ENCODE measurements at regions of chr5 and their contacts with region 1.

Region 1: GRCh38 chr5:148374692-148375360 is 8.9 kb upstream of the FBXO38 start:
- DNase-seq: peak in 2 of 5 donors; percentile 22 to 26
- ATAC-seq: peak in 3 of 4 donors; percentile 49 to 82 (median 78)
- H3K4me3 ChIP-seq: no peak overlapping the region
- H3K27ac ChIP-seq: peak overlapping the region in 2 of 12 donors; percentile 38 to 59
- H3K4me1 ChIP-seq: peaks cover 0 to 28% (median 5%) of the 10 kb centered on the region in 12 donors
- H3K27me3 ChIP-seq: no peaks in the 10 kb centered on the region
- CTCF ChIP-seq: peak; percentile 40 to 70 (median 58)
- POLR2A ChIP-seq: no peak

Region 2: GRCh38 chr5:147949711-147950573 is 424.9 kb before region 1 on chr5:
- intact Hi-C with region 1: loop called in 1 of 10 experiments (anchors 10 kb)
- DNase-seq: no peak
- ATAC-seq: peak in 1 of 4 donors; percentile 57
- H3K4me3 ChIP-seq: no peak overlapping the region
- H3K27ac ChIP-seq: no peak overlapping the region
- H3K4me1 ChIP-seq: no peaks in the 10 kb centered on the region
- H3K27me3 ChIP-seq: no peaks in the 10 kb centered on the region
- CTCF ChIP-seq: peak; percentile 54 to 78 (median 71)
- POLR2A ChIP-seq: no peak

Region 3: GRCh38 chr5:148179234-148179824 is 195.5 kb before region 1 on chr5:
- intact Hi-C with region 1: loop called in 9 of 10 experiments (anchors 2 to 10 kb)
- DNase-seq: peak in 1 of 5 donors; percentile 6
- ATAC-seq: peak in 3 of 4 donors; percentile 49 to 75 (median 70)
- H3K4me3 ChIP-seq: no peak overlapping the region
- H3K27ac ChIP-seq: no peak overlapping the region
- H3K4me1 ChIP-seq: peaks cover 0 to 5% (median 0%) of the 10 kb centered on the region in 12 donors
- H3K27me3 ChIP-seq: no peaks in the 10 kb centered on the region
- CTCF ChIP-seq: peak; percentile 51 to 88 (median 74)
- POLR2A ChIP-seq: no peak

Region 4: GRCh38 chr5:148186248-148186996 is 188.4 kb before region 1 on chr5:
- intact Hi-C with region 1: loop called in 2 of 10 experiments (anchors 5 to 10 kb)
- DNase-seq: no peak
- ATAC-seq: peak in 3 of 4 donors; percentile 52 to 82 (median 71)
- H3K4me3 ChIP-seq: no peak overlapping the region
- H3K27ac ChIP-seq: peak overlapping the region in 1 of 12 donors; percentile 75
- H3K4me1 ChIP-seq: peaks cover 0 to 9% (median 0%) of the 10 kb centered on the region in 12 donors
- H3K27me3 ChIP-seq: no peaks in the 10 kb centered on the region
- CTCF ChIP-seq: no peak
- POLR2A ChIP-seq: no peak

Region 5: GRCh38 chr5:148290271-148291195 is 84.3 kb before region 1 on chr5:
- intact Hi-C with region 1: loop called in 2 of 10 experiments (anchors 5 kb)
- DNase-seq: no peak
- ATAC-seq: peak; percentile 55 to 65 (median 61)
- H3K4me3 ChIP-seq: no peak overlapping the region
- H3K27ac ChIP-seq: no peak overlapping the region
- H3K4me1 ChIP-seq: peaks cover 0 to 3% (median 0%) of the 10 kb centered on the region in 12 donors
- H3K27me3 ChIP-seq: no peaks in the 10 kb centered on the region
- CTCF ChIP-seq: peak; percentile 17 to 60 (median 45)
- POLR2A ChIP-seq: no peak